ENCODE measurements at regions of chr14 and their contacts with region 1.

Region 1: GRCh38 chr14:88437658-88438057 is 52.2 kb downstream of the SPATA7 start:
- DNase-seq: no peak
- ATAC-seq: no peak
- H3K4me3 ChIP-seq: no peak overlapping the region
- H3K27ac ChIP-seq: no peak overlapping the region
- H3K4me1 ChIP-seq: no peaks in the 10 kb centered on the region
- H3K27me3 ChIP-seq: no peaks in the 10 kb centered on the region
- CTCF ChIP-seq: peak; percentile 17 to 56 (median 38); a peak in 3 of 6 replicates
- POLR2A ChIP-seq: no peak
- RAD21 ChIP-seq: peak; percentile 28; the same call in 1 of the 2 replicates

Region 2: DNA sequence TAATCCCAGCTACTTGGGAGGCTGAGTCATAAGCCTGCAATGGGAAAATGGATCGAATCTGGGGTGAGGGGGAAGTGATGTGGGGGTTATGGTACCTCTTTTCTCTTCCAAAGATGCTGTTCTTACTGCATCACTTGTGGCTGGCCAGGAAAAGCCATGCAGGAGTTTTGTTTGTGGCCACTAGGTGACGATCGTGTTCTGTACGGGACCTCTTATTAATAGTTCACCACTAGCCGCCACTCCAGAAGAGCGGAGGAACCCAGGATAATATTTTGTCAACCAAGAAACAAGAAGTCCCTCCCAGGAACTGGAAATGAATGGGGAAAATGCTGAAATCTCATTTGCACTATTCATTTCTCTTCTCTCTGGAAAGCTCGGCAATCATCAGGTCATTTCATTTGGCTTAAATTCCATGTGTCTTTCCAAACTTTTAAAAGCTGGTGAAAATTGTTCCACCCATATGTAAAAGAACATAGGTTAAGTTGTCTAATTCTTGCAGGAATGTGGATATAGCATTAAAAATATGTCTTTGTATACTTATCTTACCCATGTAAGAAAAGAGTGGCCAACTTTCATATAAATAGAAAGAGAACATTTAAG is 423.8 kb before region 1 on chr14:
- CTCF ChIA-PET with region 1: no interaction called
- POLR2A ChIA-PET with region 1: no interaction called
- RAD21 ChIA-PET with region 1: no interaction called
- intact Hi-C with region 1: loop called (anchors 10 kb)
- DNase-seq: peak; percentile 12
- ATAC-seq: peak; percentile 58; the same call in 1 of the 2 replicates
- H3K4me3 ChIP-seq: no peak overlapping the region
- H3K27ac ChIP-seq: no peak overlapping the region
- H3K4me1 ChIP-seq: no peaks in the 10 kb centered on the region
- H3K27me3 ChIP-seq: no peaks in the 10 kb centered on the region
- CTCF ChIP-seq: peak in 2 of 3 experiments; percentile 51 to 64; a peak in 4 of 6 replicates
- POLR2A ChIP-seq: no peak
- RAD21 ChIP-seq: peak; percentile 32; the same call in 1 of the 2 replicates

Region 3: DNA sequence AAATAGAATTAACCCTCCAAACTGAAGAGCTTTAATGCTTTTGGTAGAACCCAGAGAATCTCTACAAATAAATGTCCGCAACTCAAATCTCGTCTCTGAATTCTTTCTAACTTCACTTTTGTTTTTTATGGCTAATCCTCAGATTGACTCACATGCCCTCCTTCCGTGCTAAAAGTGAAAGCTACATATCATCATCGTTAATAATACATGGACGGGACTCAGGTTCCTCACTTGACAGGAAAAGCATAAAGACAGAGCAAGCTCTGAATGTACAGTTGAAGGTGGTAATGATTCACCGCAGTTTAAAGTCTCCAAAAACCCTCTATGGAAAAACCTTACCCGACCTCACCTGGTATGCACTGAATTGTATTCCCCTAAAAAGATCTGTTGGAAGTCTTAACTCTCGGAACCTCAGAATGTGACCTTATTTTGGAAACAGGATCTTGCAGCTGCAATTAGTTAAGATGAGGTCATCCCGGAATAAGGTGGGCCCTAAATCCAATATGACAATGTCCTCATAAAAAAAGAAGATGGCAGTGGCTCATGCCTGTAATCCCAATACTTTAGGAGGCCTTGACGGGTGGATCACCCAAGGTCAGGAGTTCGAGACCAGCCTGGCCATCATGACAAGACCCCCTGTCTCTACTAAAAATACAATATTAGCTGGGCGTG is 1126.8 kb after region 1 on chr14:
- CTCF ChIA-PET with region 1: no interaction called
- POLR2A ChIA-PET with region 1: no interaction called
- RAD21 ChIA-PET with region 1: no interaction called
- intact Hi-C with region 1: loop called (anchors 5 kb)
- DNase-seq: no peak
- ATAC-seq: no peak
- H3K4me3 ChIP-seq: no peak overlapping the region
- H3K27ac ChIP-seq: no peak overlapping the region
- H3K4me1 ChIP-seq: no peaks in the 10 kb centered on the region
- H3K27me3 ChIP-seq: no peaks in the 10 kb centered on the region
- CTCF ChIP-seq: no peak
- POLR2A ChIP-seq: no peak
- RAD21 ChIP-seq: no peak